CD4-positive, alpha-beta memory T cell (primary cell): ENCODE measurements at regions of chr2 and their contacts with region 1.

Region 1: DNA sequence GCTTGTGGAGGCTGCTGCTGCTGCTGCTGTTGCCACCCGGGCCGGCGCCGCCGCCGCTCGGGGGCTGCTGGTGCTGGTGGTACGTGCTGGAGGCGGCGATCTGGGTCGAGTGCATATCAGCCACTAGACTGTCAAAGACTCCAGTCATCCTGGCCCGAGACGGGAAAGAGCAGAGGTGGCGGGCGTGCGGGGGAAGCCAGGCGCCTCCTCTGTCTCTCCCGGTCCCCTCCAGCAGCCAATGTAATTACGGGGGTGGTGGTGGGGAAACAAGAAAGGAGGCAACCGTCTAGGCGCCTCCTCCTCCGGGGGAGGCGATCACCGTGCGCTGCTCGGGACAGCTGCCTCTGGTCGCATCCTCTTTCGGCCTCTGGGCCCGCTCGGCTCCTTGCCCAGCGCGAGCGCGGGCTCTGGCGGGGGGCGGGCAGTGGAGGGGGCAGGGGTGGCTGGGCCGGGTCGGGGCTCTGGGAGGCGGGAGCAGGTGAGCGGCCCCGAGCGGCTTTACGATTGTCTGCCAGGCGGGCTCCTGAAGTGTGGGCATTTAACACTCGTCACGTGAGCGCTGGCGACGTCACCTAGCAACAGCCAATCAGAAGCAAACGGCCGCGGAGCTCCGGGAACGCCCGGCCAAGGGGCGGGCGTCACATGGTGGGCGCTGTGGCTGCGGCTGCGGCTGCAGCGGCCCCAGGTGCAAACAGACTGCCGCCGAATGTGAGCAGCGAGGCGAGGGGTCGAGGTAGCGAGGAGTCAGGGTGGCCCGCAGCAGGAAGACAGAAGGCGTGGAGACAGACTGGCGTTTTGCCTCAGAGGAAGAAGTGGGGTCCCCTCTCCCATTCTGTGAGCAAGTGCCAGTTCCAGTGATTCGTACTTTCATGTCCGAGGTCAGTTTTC is at the start of gene DLX2:
- DNase-seq: peak in 3 of 5 donors; percentile 52 to 60 (median 52)
- H3K4me3 ChIP-seq: peak within 1 kb of the TSS; percentile 23 to 60
- H3K4me3 Mint-ChIP-seq: peak within 1 kb of the TSS; percentile 79 to 91 (median 86)
- H3K27ac ChIP-seq: no peak within 1 kb of the TSS
- H3K27ac Mint-ChIP-seq: peak within 1 kb of the TSS in 6 of 7 donors; percentile 54 to 93 (median 86)
- H3K4me1 ChIP-seq: peaks cover 80% of the 10 kb centered on the region
- H3K4me1 Mint-ChIP-seq: peaks cover 25 to 65% (median 51%) of the 10 kb centered on the region in 4 donors
- H3K27me3 ChIP-seq: peaks cover 92% of the 10 kb centered on the region
- H3K27me3 Mint-ChIP-seq: peaks cover 57 to 59% of the 10 kb centered on the region in 2 donors
- total RNA-seq, gene DLX2: not detected

Region 2: DNA sequence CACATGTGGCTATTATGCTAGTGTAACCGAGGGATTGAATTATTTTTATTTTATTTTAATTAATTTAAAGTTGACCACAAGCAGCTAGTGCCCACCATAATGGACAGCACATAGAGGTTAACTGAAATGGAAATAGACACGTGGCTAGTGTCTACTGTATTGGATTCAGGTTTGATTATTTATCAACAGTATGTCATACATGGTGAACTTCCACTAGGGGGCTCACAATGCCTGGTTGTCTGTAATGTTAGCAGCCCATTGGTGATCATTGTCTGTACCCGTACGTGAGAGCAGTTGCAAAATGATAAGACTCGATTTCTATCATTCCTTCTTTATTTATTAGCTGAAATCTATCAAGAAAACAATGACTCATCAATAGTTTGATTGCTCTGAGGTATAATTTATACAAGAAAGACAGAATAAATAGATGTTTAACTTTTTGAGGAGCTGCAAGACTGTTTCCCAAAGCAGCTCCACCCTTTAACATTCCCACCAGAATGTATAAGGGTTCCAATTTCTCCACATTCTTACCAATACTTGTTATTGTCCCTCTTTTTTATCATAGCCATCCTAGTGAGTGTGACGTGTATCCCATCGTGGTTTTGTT is 503.8 kb before region 1 on chr2:
- CTCF ChIA-PET with region 1: interaction called, 4 read pairs
- POLR2A ChIA-PET with region 1: no interaction called
- intact Hi-C with region 1: loop called (anchors 2 kb)
- DNase-seq: peak; percentile 44 to 60 (median 54)
- H3K4me3 ChIP-seq: no peak overlapping the region
- H3K4me3 Mint-ChIP-seq: peak overlapping the region in 1 of 8 donors; percentile 47
- H3K27ac ChIP-seq: no peak overlapping the region
- H3K27ac Mint-ChIP-seq: no peak overlapping the region
- H3K4me1 ChIP-seq: no peaks in the 10 kb centered on the region
- H3K4me1 Mint-ChIP-seq: peaks cover 0 to 4% (median 2%) of the 10 kb centered on the region in 4 donors
- H3K27me3 ChIP-seq: no peaks in the 10 kb centered on the region
- H3K27me3 Mint-ChIP-seq: peaks cover 0 to 2% of the 10 kb centered on the region in 2 donors

Region 3: GRCh38 chr2:171703574-171704347 is 398.9 kb before region 1 on chr2:
- CTCF ChIA-PET with region 1: interaction called, 13 read pairs
- POLR2A ChIA-PET with region 1: no interaction called
- intact Hi-C with region 1: loop called (anchors 1 kb)
- DNase-seq: peak in 4 of 5 donors; percentile 19 to 33 (median 20)
- H3K4me3 ChIP-seq: no peak overlapping the region
- H3K4me3 Mint-ChIP-seq: no peak overlapping the region
- H3K27ac ChIP-seq: no peak overlapping the region
- H3K27ac Mint-ChIP-seq: peak overlapping the region in 6 of 7 donors; percentile 27 to 86 (median 75)
- H3K4me1 ChIP-seq: no peaks in the 10 kb centered on the region
- H3K4me1 Mint-ChIP-seq: peaks cover 6 to 12% (median 8%) of the 10 kb centered on the region in 4 donors
- H3K27me3 ChIP-seq: no peaks in the 10 kb centered on the region
- H3K27me3 Mint-ChIP-seq: no peaks in the 10 kb centered on the region

Region 4: DNA sequence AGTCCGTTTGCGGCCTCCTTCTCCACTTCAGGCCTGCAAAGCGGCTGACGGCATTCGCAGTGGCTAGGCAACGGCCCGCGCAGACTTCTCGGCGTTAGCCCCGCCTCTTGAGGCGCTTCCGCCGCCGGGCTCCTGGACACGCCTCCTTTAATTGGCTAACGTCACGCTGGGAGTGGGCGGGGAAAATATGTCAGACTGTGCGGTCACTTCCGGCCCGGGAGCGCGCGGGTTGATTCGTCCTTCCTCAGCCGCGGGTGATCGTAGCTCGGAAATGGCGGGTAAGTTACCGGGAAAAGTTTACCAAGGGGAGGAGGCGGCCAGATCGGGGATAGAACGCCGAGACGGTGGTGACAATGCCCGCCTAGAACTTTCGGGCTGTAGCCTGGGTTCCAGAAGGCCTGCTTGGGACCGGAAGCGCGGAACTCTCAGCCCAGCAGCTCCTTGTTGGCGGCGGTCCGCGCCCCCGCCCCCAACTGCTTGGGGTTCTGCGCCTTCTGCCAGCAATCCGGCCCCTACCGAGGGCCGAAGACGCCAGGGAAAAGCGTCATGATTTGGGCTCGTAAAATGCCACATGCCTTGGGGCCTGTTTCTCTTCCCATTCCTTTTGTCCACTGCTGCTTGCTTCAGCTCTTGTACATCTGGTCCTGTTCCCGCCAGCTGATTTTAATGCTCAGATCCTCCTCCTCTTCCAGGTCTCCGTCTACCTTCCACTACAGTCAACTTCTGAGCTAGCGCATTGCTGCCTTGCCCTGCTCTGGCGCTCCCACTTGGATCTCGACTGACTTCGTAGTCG is 180.2 kb before region 1 on chr2 and contains the start of gene HAT1:
- CTCF ChIA-PET with region 1: no interaction called
- POLR2A ChIA-PET with region 1: no interaction called
- intact Hi-C with region 1: loop called (anchors 2 kb)
- DNase-seq: peak; percentile 96 to 98 (median 97)
- H3K4me3 ChIP-seq: peak within 1 kb of the TSS; percentile 70 to 88
- H3K4me3 Mint-ChIP-seq: peak within 1 kb of the TSS; percentile 98 to 100 (median 100)
- H3K27ac ChIP-seq: peak within 1 kb of the TSS; percentile 95
- H3K27ac Mint-ChIP-seq: peak within 1 kb of the TSS; percentile 93 to 100 (median 99)
- H3K4me1 ChIP-seq: peaks cover 39% of the 10 kb centered on the region
- H3K4me1 Mint-ChIP-seq: peaks cover 18 to 46% (median 33%) of the 10 kb centered on the region in 4 donors
- H3K27me3 ChIP-seq: no peaks in the 10 kb centered on the region
- H3K27me3 Mint-ChIP-seq: no peaks in the 10 kb centered on the region
- total RNA-seq, gene HAT1: 22.6 to 27.7 TPM

Region 5: GRCh38 chr2:171939743-171940071 is 162.9 kb before region 1 on chr2:
- CTCF ChIA-PET with region 1: no interaction called
- POLR2A ChIA-PET with region 1: no interaction called
- intact Hi-C with region 1: no loop called
- DNase-seq: no peak
- H3K4me3 ChIP-seq: no peak overlapping the region
- H3K4me3 Mint-ChIP-seq: no peak overlapping the region
- H3K27ac ChIP-seq: no peak overlapping the region
- H3K27ac Mint-ChIP-seq: no peak overlapping the region
- H3K4me1 ChIP-seq: no peaks in the 10 kb centered on the region
- H3K4me1 Mint-ChIP-seq: peaks cover 26 to 54% (median 34%) of the 10 kb centered on the region in 4 donors
- H3K27me3 ChIP-seq: no peaks in the 10 kb centered on the region
- H3K27me3 Mint-ChIP-seq: no peaks in the 10 kb centered on the region

Region 6: DNA sequence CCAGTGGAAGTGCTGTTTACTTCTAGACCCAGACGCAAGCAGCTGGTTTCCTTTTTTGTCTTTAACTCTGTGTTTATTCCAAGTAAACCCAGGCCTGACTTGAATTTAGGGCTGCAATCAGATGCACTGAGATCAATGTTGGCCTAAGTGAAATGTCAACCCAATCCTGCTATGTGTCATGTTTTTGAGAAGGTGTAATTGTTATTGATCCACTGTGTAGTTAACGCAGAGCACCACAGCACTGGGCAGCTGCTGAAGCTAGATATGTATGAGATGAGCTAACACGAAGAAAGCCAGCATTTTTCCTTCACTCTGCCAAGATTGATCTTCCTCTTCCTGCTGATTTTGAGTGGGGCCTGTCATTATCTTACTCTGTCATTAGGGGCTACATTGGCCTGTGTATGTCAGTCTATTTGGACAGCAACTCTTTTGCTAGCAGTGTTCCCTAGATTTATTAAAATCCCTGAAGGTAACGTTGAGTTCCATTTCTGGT is 36.2 kb before region 1 on chr2:
- CTCF ChIA-PET with region 1: no interaction called
- POLR2A ChIA-PET with region 1: no interaction called
- intact Hi-C with region 1: no loop called
- DNase-seq: no peak
- H3K4me3 ChIP-seq: no peak overlapping the region
- H3K4me3 Mint-ChIP-seq: no peak overlapping the region
- H3K27ac ChIP-seq: no peak overlapping the region
- H3K27ac Mint-ChIP-seq: no peak overlapping the region
- H3K4me1 ChIP-seq: no peaks in the 10 kb centered on the region
- H3K4me1 Mint-ChIP-seq: no peaks in the 10 kb centered on the region
- H3K27me3 ChIP-seq: no peaks in the 10 kb centered on the region
- H3K27me3 Mint-ChIP-seq: peaks cover 0 to 1% of the 10 kb centered on the region in 2 donors

Region 7: DNA sequence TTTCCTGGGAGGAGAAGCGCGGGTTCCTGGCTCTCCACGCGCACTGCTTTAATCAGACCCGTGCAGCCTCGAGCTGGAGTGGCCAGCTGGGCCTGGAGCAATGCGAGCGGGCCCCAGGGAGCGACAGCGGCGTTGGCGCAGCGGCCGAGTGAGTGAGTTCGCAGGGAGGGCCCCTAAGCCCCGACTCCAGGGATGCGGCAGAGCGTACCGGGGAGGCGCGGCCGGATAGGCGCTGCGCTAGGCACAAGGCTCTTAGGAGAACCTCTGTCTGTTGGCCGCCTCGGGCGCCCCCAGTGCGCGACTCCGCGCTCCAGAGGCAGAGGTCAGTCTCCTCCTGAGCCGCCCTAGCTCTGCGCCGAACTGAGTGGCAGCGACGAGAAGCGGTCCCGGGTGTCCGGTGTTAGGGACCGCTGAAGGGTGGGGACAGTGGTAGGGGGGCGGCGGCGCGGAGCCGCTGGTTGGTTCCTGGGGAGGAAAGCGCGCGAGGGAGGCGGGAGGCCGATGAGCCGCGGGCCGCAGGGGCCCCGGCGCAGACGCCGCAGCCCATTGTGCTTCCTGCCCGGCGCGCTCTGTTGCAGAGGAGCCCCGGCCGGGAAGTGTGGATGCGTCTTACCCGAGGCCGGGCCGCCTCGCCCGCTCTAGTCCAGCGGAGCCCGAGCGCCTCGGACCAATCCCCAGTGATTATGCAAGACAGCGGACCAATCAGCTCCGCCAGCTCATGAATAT is 17.7 kb before region 1 on chr2:
- CTCF ChIA-PET with region 1: interaction called, 5 read pairs
- POLR2A ChIA-PET with region 1: interaction called, 186 read pairs
- intact Hi-C with region 1: loop called (anchors 2 kb)
- DNase-seq: peak in 4 of 5 donors; percentile 48 to 54 (median 51)
- H3K4me3 ChIP-seq: peak overlapping the region; percentile 28 to 42
- H3K4me3 Mint-ChIP-seq: peak overlapping the region; percentile 73 to 89 (median 78)
- H3K27ac ChIP-seq: no peak overlapping the region
- H3K27ac Mint-ChIP-seq: peak overlapping the region in 6 of 7 donors; percentile 24 to 99 (median 86)
- H3K4me1 ChIP-seq: peaks cover 67% of the 10 kb centered on the region
- H3K4me1 Mint-ChIP-seq: peaks cover 27 to 72% (median 58%) of the 10 kb centered on the region in 4 donors
- H3K27me3 ChIP-seq: peaks cover 99% of the 10 kb centered on the region
- H3K27me3 Mint-ChIP-seq: peaks cover 72 to 82% of the 10 kb centered on the region in 2 donors